ENCODE measurements at regions of chr9 and their contacts with region 1.

Region 1: GRCh38 chr9:36166101-36166927 is 2.9 kb upstream of the CCIN start:
- DNase-seq: peak; percentile 49 to 91
- H3K4me3 ChIP-seq: peak overlapping the region; percentile 65 to 67
- H3K27ac ChIP-seq: peak overlapping the region; percentile 75 to 80
- H3K4me1 ChIP-seq: peaks cover 4 to 30% of the 10 kb centered on the region in 2 donors
- H3K27me3 ChIP-seq: no peaks in the 10 kb centered on the region
- CTCF ChIP-seq: peak; percentile 90 to 95 (median 94)

Region 2: DNA sequence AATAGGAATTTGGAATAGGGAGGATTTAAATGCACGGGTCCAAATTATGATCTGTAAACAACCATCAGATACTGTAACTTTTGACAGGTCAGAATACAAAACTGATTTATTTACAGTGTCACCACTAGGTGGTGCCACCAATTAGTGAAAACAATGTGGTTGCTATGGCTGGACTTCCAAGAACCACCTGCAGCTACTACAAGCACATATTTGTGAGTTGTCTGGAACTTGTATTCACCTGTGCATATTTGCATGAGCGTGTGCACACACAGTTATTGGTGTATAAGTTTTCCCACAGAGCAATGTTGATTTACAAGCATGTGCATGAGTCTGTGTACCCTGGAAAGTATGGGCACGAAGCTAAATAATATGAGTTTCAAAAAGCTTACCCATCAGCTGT is 263.3 kb before region 1 on chr9:
- intact Hi-C with region 1: loop called (anchors 10 kb)
- DNase-seq: no peak
- H3K4me3 ChIP-seq: no peak overlapping the region
- H3K27ac ChIP-seq: no peak overlapping the region
- H3K4me1 ChIP-seq: peaks cover 27 to 41% of the 10 kb centered on the region in 2 donors
- H3K27me3 ChIP-seq: no peaks in the 10 kb centered on the region
- CTCF ChIP-seq: peak; percentile 59 to 70 (median 69)

Region 3: DNA sequence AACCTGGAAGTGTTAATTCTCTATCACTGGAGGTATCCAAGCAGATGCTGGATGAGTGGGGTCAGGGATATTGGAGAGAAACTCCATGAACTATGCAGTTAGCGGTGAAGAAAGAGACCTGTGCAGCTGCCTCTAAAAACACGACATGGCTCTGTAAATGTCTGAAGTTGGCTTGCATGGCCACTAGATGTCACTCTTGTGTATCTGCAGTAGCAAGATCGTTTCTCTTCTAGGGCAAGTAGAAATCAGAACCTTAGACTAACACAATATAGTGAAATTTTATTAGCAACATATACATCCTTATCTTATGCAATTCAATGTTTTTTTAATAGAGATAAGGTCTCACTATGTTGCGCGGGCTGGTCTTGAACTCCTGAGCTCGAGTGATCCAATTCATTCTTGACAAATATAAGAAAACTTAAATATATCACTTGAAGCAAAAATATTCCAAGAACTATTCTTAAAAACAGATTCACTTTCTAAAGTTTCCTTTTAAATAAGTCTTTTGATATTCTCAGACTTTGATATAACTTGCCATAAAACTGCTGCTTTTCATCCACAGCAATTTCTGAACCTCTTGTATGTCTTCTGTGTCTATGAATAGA is 211.3 kb before region 1 on chr9:
- intact Hi-C with region 1: loop called (anchors 5 kb)
- DNase-seq: peak in 1 of 2 donors; percentile 77
- H3K4me3 ChIP-seq: no peak overlapping the region
- H3K27ac ChIP-seq: no peak overlapping the region
- H3K4me1 ChIP-seq: no peaks in the 10 kb centered on the region
- H3K27me3 ChIP-seq: no peaks in the 10 kb centered on the region
- CTCF ChIP-seq: peak; percentile 67 to 87 (median 73)

Region 4: DNA sequence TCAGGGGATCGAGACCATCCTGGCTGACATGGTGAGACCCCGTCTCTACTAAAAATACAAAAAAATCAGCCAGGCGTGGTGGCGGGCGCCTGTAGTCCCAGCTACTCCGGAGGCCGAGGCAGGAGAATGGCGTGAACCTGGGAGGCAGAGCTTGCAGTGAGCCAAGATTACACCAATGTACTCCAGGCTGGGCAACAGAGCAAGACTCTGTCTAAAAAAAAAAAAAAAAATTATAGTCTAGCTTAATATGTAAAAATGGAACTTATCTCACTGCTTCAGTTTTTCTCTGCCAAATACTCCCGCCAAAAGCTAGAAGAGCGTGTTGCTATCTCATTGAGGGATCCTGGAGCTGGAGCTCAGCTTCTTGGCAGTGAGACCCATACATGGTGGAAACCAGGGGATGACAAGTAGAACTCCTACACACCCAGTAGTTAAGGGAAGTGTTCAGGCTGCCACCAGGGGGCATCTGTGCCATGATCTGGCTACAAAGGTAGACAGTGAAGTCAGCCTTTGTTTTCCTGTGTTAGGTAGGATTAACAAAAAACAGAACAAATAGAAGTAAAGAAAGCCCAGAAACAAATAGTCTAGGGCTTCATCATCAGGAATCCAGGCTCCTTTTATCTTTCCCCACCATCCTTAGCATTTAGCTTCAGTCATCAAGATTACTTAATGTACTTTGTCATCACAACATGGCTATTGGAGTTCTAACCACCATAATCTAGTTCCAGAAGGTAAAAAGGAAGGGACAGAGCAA is 63.4 kb before region 1 on chr9:
- intact Hi-C with region 1: loop called (anchors 1 kb)
- DNase-seq: peak; percentile 50 to 88
- H3K4me3 ChIP-seq: no peak overlapping the region
- H3K27ac ChIP-seq: peak overlapping the region; percentile 31 to 57
- H3K4me1 ChIP-seq: no peaks in the 10 kb centered on the region
- H3K27me3 ChIP-seq: no peaks in the 10 kb centered on the region
- CTCF ChIP-seq: peak; percentile 75 to 82 (median 79)

Region 5: DNA sequence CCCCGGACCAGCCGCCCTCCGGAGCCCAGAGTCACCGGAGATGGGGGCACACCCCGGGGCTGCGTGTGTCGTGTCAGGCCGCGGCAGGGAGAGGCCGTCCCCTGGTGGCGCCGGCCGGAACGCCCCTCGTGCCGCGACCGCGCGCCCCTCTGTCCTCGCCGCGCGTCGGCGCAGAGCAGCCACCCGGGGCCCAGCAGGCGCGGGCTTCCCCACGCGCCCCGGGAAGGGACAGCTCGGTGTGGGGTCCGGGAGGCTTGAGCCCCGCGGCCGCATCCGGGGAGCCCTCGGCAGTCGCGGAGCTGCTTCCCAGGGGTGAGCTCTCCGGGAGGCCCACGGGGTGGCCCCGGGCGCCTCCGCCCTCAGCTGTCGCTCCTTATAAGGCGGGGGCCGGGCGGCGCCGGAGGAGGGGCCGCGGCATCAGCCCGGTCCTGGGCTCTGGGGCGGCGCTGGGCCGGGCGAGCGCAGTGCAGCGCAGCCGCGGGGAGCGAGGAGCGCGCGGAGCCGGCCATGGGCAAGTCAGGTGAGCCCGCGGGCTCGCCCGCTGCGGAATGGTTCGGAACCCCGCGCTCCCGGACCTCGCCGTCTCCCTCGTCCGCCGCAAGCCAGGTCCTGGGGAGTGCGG is 29.9 kb before region 1 on chr9 and contains the start of gene GLIPR2:
- intact Hi-C with region 1: loop called (anchors 1 kb)
- DNase-seq: peak in 1 of 2 donors; percentile 90
- H3K4me3 ChIP-seq: peak within 1 kb of the TSS; percentile 84 to 90
- H3K27ac ChIP-seq: peak within 1 kb of the TSS; percentile 71 to 78
- H3K4me1 ChIP-seq: peaks cover 0 to 16% of the 10 kb centered on the region in 2 donors
- H3K27me3 ChIP-seq: no peaks in the 10 kb centered on the region
- CTCF ChIP-seq: peak; percentile 13 to 34 (median 20)
- total RNA-seq, gene GLIPR2: 54.4 TPM

Region 6: DNA sequence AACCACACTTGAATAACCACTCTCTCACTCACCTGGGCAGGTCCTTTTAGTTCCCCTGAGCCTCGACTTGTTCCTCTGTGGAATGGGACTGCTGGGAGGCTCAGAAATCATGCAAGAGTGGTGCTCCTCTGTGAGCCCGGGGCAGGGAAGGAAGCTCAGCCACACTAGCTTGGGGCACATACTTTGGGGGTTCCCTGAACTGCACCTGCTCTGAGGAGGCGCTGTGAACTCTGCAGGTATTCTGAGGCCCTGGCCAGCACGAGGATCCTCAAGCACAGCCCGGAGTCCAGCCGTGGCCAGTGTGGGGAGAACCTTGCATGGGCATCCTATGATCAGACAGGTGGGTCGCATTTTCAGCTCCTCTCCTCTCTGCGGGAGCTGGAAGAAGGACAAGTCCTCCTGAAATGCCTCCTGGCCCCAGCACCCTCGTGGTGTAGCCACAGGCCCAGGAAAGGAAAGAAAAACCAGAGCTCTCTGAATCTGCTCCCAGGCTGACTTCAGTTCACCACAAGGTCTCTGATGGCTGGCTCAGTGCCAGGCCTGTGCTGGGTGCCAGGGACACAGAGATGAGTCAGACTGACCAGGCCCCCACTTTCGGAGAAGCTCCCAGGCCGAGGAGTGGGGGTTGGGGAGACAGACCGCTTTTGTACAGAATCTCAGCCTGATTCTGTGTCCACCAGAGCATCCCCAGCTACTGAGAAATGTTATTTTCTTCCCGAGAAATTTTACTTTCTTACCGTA is 17.8 kb before region 1 on chr9:
- intact Hi-C with region 1: loop called (anchors 1 kb)
- DNase-seq: peak; percentile 95 to 99
- H3K4me3 ChIP-seq: peak overlapping the region in 1 of 2 donors; percentile 21
- H3K27ac ChIP-seq: peak overlapping the region; percentile 59 to 82
- H3K4me1 ChIP-seq: peaks cover 10 to 22% of the 10 kb centered on the region in 2 donors
- H3K27me3 ChIP-seq: no peaks in the 10 kb centered on the region
- CTCF ChIP-seq: no peak

Region 7: GRCh38 chr9:36190388-36191287 is 24.3 kb after region 1 on chr9 and contains the start of gene CLTA:
- intact Hi-C with region 1: loop called (anchors 2 kb)
- DNase-seq: peak; percentile 91 to 98
- H3K4me3 ChIP-seq: peak within 1 kb of the TSS; percentile 86 to 99
- H3K27ac ChIP-seq: peak within 1 kb of the TSS; percentile 94 to 95
- H3K4me1 ChIP-seq: peaks cover 4 to 31% of the 10 kb centered on the region in 2 donors
- H3K27me3 ChIP-seq: no peaks in the 10 kb centered on the region
- CTCF ChIP-seq: peak; percentile 43 to 63 (median 53)
- total RNA-seq, gene CLTA: 222 TPM

Measured in ascending aorta (tissue), 2 donors.